PC-9 (cell line): ENCODE measurements at regions of chr3 and their contacts with region 1.

Region 1: GRCh38 chr3:194003125-194004057 is 132.6 kb upstream of the HES1 start:
- DNase-seq: peak; percentile 98
- H3K4me3 ChIP-seq: peak overlapping the region; percentile 35; the same call in 1 of the 2 replicates
- H3K27ac ChIP-seq: peak overlapping the region; percentile 88
- H3K4me1 ChIP-seq: peaks cover 40% of the 10 kb centered on the region
- H3K27me3 ChIP-seq: no peaks in the 10 kb centered on the region
- CTCF ChIP-seq: no peak

Region 2: GRCh38 chr3:192336287-192336686 is 1667.1 kb before region 1 on chr3:
- CTCF ChIA-PET with region 1: no interaction called
- POLR2A ChIA-PET with region 1: no interaction called
- intact Hi-C with region 1: no loop called
- DNase-seq: no peak
- H3K4me3 ChIP-seq: no peak overlapping the region
- H3K27ac ChIP-seq: no peak overlapping the region
- H3K4me1 ChIP-seq: no peaks in the 10 kb centered on the region
- H3K27me3 ChIP-seq: no peaks in the 10 kb centered on the region
- CTCF ChIP-seq: no peak; the same call in 1 of the 2 replicates

Region 3: GRCh38 chr3:193851941-193852674 is 151.3 kb before region 1 on chr3:
- CTCF ChIA-PET with region 1: no interaction called
- POLR2A ChIA-PET with region 1: interaction called, 3 read pairs
- intact Hi-C with region 1: loop called (anchors 1 kb)
- DNase-seq: peak; percentile 82 to 98
- H3K4me3 ChIP-seq: peak overlapping the region; percentile 49
- H3K27ac ChIP-seq: peak overlapping the region; percentile 98
- H3K4me1 ChIP-seq: peaks cover 70% of the 10 kb centered on the region
- H3K27me3 ChIP-seq: no peaks in the 10 kb centered on the region
- CTCF ChIP-seq: no peak

Region 4: DNA sequence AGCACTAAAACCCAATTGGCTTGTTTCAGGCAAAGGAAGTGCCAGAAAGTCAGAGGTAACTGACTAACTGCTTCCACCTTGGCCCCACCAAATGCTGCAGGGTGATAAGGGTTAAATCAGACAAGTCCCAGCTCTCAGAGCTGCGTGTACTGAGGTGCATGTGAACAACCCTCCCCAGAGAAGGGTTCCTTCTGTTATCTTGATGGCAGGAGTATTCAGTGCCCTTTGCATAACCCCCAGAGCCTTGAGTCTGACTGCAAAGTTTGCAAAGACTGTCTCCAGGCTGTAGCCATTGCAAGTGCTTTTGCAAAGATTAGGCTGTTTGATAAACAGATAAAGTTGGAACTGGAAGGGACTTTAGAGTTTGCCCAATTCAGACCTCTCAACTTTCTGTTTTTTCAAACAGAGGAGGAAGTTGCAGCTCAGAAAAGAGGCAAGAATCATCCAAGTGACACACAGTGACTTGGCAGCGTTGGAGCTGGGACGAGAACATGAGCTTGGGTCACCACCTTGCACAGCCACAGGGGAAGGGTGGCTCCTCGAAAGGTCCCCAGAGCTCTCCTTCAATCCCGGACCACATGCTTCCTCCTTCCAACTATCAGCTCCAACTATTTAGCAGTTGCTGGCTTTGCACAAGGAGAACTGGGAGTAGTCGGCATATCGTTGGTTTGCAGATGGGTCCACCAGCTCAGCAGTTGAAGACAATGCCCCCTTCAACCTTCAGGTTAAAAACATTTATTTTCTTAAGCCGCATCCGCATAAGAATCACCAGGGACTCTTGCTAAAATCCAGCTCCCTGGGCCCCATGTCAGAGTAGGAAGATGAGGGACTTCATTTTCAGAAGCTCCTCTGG is 92.3 kb before region 1 on chr3:
- CTCF ChIA-PET with region 1: no interaction called
- POLR2A ChIA-PET with region 1: no interaction called
- intact Hi-C with region 1: loop called (anchors 1 kb)
- DNase-seq: peak; percentile 63 to 94
- H3K4me3 ChIP-seq: no peak overlapping the region
- H3K27ac ChIP-seq: peak overlapping the region; percentile 69
- H3K4me1 ChIP-seq: peaks cover 26% of the 10 kb centered on the region
- H3K27me3 ChIP-seq: no peaks in the 10 kb centered on the region
- CTCF ChIP-seq: no peak

Region 5: GRCh38 chr3:193982258-193982659 is 21.1 kb before region 1 on chr3:
- CTCF ChIA-PET with region 1: no interaction called
- POLR2A ChIA-PET with region 1: interaction called, 12 read pairs
- intact Hi-C with region 1: loop called (anchors 1 kb)
- DNase-seq: peak in 1 of 2 experiments; percentile 97
- H3K4me3 ChIP-seq: no peak overlapping the region
- H3K27ac ChIP-seq: no peak overlapping the region
- H3K4me1 ChIP-seq: 0 out of 2 replicates have a peak, but pooled peaks cover 6% of the 10 kb centered on the region
- H3K27me3 ChIP-seq: no peaks in the 10 kb centered on the region
- CTCF ChIP-seq: no peak

Region 6: DNA sequence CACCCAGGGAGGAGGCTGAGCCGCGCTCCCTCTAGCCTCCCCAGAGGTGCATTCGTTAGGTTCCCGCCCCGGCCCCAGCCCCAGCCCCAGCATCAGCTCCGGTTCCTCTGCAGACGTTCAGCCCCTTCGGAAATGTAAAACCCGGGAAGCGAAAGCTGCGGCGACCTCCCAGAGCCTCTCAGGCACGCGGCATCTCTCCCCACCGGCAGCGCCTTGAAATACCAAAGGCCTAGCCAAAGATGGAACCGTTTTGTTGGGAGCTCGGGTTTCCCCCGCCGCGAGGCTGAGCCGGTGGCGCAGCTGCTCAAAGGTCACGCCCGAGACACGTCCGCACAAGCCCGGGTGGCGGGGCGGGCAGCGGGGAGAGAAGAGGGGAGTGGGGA is 54.8 kb after region 1 on chr3:
- CTCF ChIA-PET with region 1: interaction called, 6 read pairs
- POLR2A ChIA-PET with region 1: interaction called, 11 read pairs
- intact Hi-C with region 1: no loop called
- DNase-seq: peak in 1 of 2 experiments; percentile 41
- H3K4me3 ChIP-seq: no peak overlapping the region
- H3K27ac ChIP-seq: no peak overlapping the region
- H3K4me1 ChIP-seq: peaks cover 12% of the 10 kb centered on the region
- H3K27me3 ChIP-seq: no peaks in the 10 kb centered on the region
- CTCF ChIP-seq: no peak

Region 7: GRCh38 chr3:194089357-194090177 is 86.2 kb after region 1 on chr3:
- CTCF ChIA-PET with region 1: interaction called, 3 read pairs
- POLR2A ChIA-PET with region 1: interaction called, 5 read pairs
- intact Hi-C with region 1: loop called (anchors 1 kb)
- DNase-seq: peak; percentile 98 to 100
- H3K4me3 ChIP-seq: peak overlapping the region; percentile 16; the same call in 1 of the 2 replicates
- H3K27ac ChIP-seq: peak overlapping the region; percentile 98
- H3K4me1 ChIP-seq: peaks cover 48% of the 10 kb centered on the region
- H3K27me3 ChIP-seq: no peaks in the 10 kb centered on the region
- CTCF ChIP-seq: no peak

Region 8: GRCh38 chr3:194323785-194324735 is 320.7 kb after region 1 on chr3:
- CTCF ChIA-PET with region 1: no interaction called
- POLR2A ChIA-PET with region 1: no interaction called
- intact Hi-C with region 1: loop called (anchors 2 kb)
- DNase-seq: peak; percentile 60 to 72
- H3K4me3 ChIP-seq: no peak overlapping the region
- H3K27ac ChIP-seq: peak overlapping the region; percentile 98
- H3K4me1 ChIP-seq: peaks cover 39% of the 10 kb centered on the region
- H3K27me3 ChIP-seq: no peaks in the 10 kb centered on the region
- CTCF ChIP-seq: no peak